ENCODE measurements at regions of chr11 and their contacts with region 1.

Region 1: DNA sequence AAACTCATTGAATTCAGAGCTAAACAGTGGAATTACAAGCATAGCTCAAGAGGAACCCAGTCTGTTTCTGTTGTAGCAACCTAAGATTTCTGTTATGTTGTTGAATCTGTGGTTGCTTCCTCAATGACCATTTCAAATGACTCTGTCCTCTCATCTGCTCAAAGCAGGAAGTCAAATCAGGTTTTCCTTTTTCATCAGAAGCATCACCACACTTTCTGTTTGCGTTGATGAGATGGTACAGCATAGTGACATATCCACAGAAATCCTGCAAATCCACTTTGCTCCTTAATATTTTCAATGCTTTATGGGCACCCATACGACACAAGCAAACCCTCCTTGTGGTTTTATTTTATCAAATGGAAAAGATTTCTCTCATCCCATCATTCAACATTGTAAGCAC is 12.6 kb upstream of the UCP2 start:
- DNase-seq: peak in 3 of 14 experiments; percentile 86 to 93 (median 89)
- ATAC-seq: peak; percentile 79
- H3K4me3 ChIP-seq: peak overlapping the region; percentile 35
- H3K4me3 Mint-ChIP-seq: peak overlapping the region; percentile 79
- H3K27ac ChIP-seq: peak overlapping the region; percentile 80 to 92
- H3K27ac Mint-ChIP-seq: peak overlapping the region; percentile 95
- H3K4me1 ChIP-seq: peaks cover 54% of the 10 kb centered on the region
- H3K4me1 Mint-ChIP-seq: peaks cover 76% of the 10 kb centered on the region
- H3K27me3 ChIP-seq: no peaks in the 10 kb centered on the region
- H3K27me3 Mint-ChIP-seq: no peaks in the 10 kb centered on the region
- CTCF ChIP-seq: no peak

Region 2: GRCh38 chr11:73982969-73983740 is 12.1 kb before region 1 on chr11:
- CTCF ChIA-PET with region 1: interaction called, 7 read pairs
- POLR2A ChIA-PET with region 1: interaction called, 264 read pairs
- intact Hi-C with region 1: loop called (anchors 1 kb)
- DNase-seq: peak; percentile 86 to 97 (median 90)
- ATAC-seq: peak; percentile 73
- H3K4me3 ChIP-seq: peak overlapping the region; percentile 87
- H3K4me3 Mint-ChIP-seq: peak overlapping the region; percentile 100
- H3K27ac ChIP-seq: peak overlapping the region; percentile 81 to 96
- H3K27ac Mint-ChIP-seq: peak overlapping the region; percentile 98
- H3K4me1 ChIP-seq: peaks cover 50% of the 10 kb centered on the region
- H3K4me1 Mint-ChIP-seq: peaks cover 57% of the 10 kb centered on the region
- H3K27me3 ChIP-seq: no peaks in the 10 kb centered on the region
- H3K27me3 Mint-ChIP-seq: no peaks in the 10 kb centered on the region
- CTCF ChIP-seq: no peak

Region 3: GRCh38 chr11:74030723-74031676 is 35.8 kb after region 1 on chr11:
- CTCF ChIA-PET with region 1: interaction called, 3 read pairs
- POLR2A ChIA-PET with region 1: interaction called, 3 read pairs
- intact Hi-C with region 1: loop called (anchors 5 kb)
- DNase-seq: peak in 1 of 14 experiments; percentile 41
- ATAC-seq: no peak
- H3K4me3 ChIP-seq: peak overlapping the region; percentile 2
- H3K4me3 Mint-ChIP-seq: peak overlapping the region; percentile 40
- H3K27ac ChIP-seq: peak overlapping the region in 1 of 2 donors; percentile 6
- H3K27ac Mint-ChIP-seq: peak overlapping the region; percentile 70
- H3K4me1 ChIP-seq: peaks cover 25% of the 10 kb centered on the region
- H3K4me1 Mint-ChIP-seq: peaks cover 21% of the 10 kb centered on the region
- H3K27me3 ChIP-seq: no peaks in the 10 kb centered on the region
- H3K27me3 Mint-ChIP-seq: no peaks in the 10 kb centered on the region
- CTCF ChIP-seq: no peak

Region 4: GRCh38 chr11:74212533-74212932 is 217.3 kb after region 1 on chr11:
- CTCF ChIA-PET with region 1: no interaction called
- POLR2A ChIA-PET with region 1: no interaction called
- intact Hi-C with region 1: no loop called
- DNase-seq: no peak
- ATAC-seq: no peak
- H3K4me3 ChIP-seq: no peak overlapping the region
- H3K4me3 Mint-ChIP-seq: no peak overlapping the region
- H3K27ac ChIP-seq: no peak overlapping the region
- H3K27ac Mint-ChIP-seq: no peak overlapping the region
- H3K4me1 ChIP-seq: no peaks in the 10 kb centered on the region
- H3K4me1 Mint-ChIP-seq: no peaks in the 10 kb centered on the region
- H3K27me3 ChIP-seq: no peaks in the 10 kb centered on the region
- H3K27me3 Mint-ChIP-seq: no peaks in the 10 kb centered on the region
- CTCF ChIP-seq: no peak

Measured in CD4-positive, alpha-beta T cell (primary cell).